PC-3 (cell line): ENCODE measurements at regions of chr14 and their contacts with region 1.

Region 1: GRCh38 chr14:49767562-49768300 is at the start of gene KLHDC2:
- DNase-seq: peak; percentile 94
- ATAC-seq: peak; percentile 74
- H3K4me3 ChIP-seq: peak within 1 kb of the TSS; percentile 94
- H3K27ac ChIP-seq: peak within 1 kb of the TSS; percentile 84
- H3K4me1 ChIP-seq: peaks cover 33% of the 10 kb centered on the region
- H3K27me3 ChIP-seq: no peaks in the 10 kb centered on the region
- CTCF ChIP-seq: peak; percentile 63; the same call in 1 of the 2 replicates
- total RNA-seq, gene KLHDC2: 123 and 126 TPM in 2 replicates

Region 2: GRCh38 chr14:49585803-49586672 is 181.7 kb before region 1 on chr14 and contains the start of gene RPS29:
- CTCF ChIA-PET with region 1: interaction called, 3 read pairs
- POLR2A ChIA-PET with region 1: interaction called, 3 read pairs
- intact Hi-C with region 1: loop called (anchors 1 kb)
- DNase-seq: peak; percentile 100
- ATAC-seq: peak; percentile 89
- H3K4me3 ChIP-seq: peak within 1 kb of the TSS; percentile 93
- H3K27ac ChIP-seq: peak within 1 kb of the TSS; percentile 59
- H3K4me1 ChIP-seq: peaks cover 20% of the 10 kb centered on the region
- H3K27me3 ChIP-seq: no peaks in the 10 kb centered on the region
- CTCF ChIP-seq: no peak
- total RNA-seq, gene RPS29: 1,420 and 1,912 TPM in 2 replicates

Region 3: DNA sequence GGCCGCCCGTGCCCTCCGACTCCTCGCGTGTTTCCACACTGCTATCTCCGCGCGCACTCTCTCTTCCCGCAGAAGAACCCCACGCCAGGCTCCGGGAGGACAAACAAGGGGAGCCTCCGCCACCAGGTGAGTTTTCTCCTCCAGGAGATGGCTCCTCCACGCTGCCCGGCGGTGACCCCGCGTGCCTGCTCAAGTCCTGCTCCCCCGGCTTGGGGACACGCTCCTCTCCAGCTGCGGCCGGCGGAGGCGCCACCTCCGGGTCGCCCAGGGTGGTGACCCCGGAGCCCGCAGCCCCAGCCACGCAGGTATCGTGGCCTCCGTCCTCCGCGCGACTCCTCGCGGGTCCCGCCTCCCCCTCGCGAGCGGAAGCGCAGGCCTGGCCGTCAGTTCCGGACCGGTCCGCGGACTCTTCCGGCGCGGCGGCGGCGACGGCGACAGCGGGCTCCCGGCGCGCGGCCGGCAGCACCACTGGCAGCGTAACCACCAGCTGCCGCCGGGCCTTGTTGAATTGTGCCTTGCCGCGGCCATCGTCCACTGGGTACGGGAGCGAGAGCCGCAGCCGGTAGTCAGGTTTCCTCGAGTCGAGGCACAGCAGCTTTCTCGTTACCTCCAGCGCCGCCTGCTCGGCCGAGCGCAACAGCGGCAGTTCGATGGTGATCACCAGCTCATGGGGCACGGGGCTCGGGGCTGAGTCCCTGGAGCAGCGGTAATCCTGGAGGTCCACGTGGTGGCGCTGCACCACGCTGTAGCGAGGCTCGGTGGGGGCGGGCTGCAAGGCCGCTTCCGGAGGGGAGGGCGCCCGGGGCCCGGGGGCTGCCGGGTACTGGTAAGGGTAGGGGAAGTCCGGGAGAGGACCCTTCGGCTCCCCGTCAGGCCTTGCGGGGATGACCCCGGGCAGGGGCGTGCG is 133.8 kb before region 1 on chr14:
- CTCF ChIA-PET with region 1: interaction called, 21 read pairs
- POLR2A ChIA-PET with region 1: interaction called, 25 read pairs
- intact Hi-C with region 1: loop called (anchors 1 kb)
- DNase-seq: peak; percentile 97
- ATAC-seq: peak; percentile 78
- H3K4me3 ChIP-seq: peak overlapping the region; percentile 71
- H3K27ac ChIP-seq: peak overlapping the region; percentile 88
- H3K4me1 ChIP-seq: peaks cover 28% of the 10 kb centered on the region
- H3K27me3 ChIP-seq: no peaks in the 10 kb centered on the region
- CTCF ChIP-seq: peak; percentile 94

Region 4: GRCh38 chr14:49692811-49693734 is 74.7 kb before region 1 on chr14 and contains the start of gene KLHDC1:
- CTCF ChIA-PET with region 1: interaction called, 9 read pairs
- POLR2A ChIA-PET with region 1: interaction called, 29 read pairs
- intact Hi-C with region 1: loop called (anchors 1 kb)
- DNase-seq: peak; percentile 68
- ATAC-seq: peak; percentile 72
- H3K4me3 ChIP-seq: peak within 1 kb of the TSS; percentile 87
- H3K27ac ChIP-seq: peak within 1 kb of the TSS; percentile 41
- H3K4me1 ChIP-seq: peaks cover 12% of the 10 kb centered on the region; the same call in 1 of the 2 replicates
- H3K27me3 ChIP-seq: no peaks in the 10 kb centered on the region
- CTCF ChIP-seq: no peak
- total RNA-seq, gene KLHDC1: 0.07 and 0.58 TPM in 2 replicates

Region 5: GRCh38 chr14:49732896-49733295 is 34.8 kb before region 1 on chr14:
- CTCF ChIA-PET with region 1: no interaction called
- POLR2A ChIA-PET with region 1: no interaction called
- intact Hi-C with region 1: no loop called
- DNase-seq: no peak
- ATAC-seq: no peak
- H3K4me3 ChIP-seq: no peak overlapping the region
- H3K27ac ChIP-seq: no peak overlapping the region
- H3K4me1 ChIP-seq: no peaks in the 10 kb centered on the region
- H3K27me3 ChIP-seq: no peaks in the 10 kb centered on the region
- CTCF ChIP-seq: no peak

Region 6: GRCh38 chr14:49792618-49793017 is 24.9 kb after region 1 on chr14:
- CTCF ChIA-PET with region 1: no interaction called
- POLR2A ChIA-PET with region 1: no interaction called
- intact Hi-C with region 1: no loop called
- DNase-seq: no peak
- ATAC-seq: no peak
- H3K4me3 ChIP-seq: no peak overlapping the region
- H3K27ac ChIP-seq: no peak overlapping the region
- H3K4me1 ChIP-seq: peaks cover 11% of the 10 kb centered on the region
- H3K27me3 ChIP-seq: no peaks in the 10 kb centered on the region
- CTCF ChIP-seq: no peak

Region 7: GRCh38 chr14:49828640-49829039 is 60.9 kb after region 1 on chr14:
- CTCF ChIA-PET with region 1: no interaction called
- POLR2A ChIA-PET with region 1: no interaction called
- intact Hi-C with region 1: loop called (anchors 5 kb)
- DNase-seq: no peak
- ATAC-seq: no peak
- H3K4me3 ChIP-seq: no peak overlapping the region
- H3K27ac ChIP-seq: no peak overlapping the region
- H3K4me1 ChIP-seq: no peaks in the 10 kb centered on the region
- H3K27me3 ChIP-seq: no peaks in the 10 kb centered on the region
- CTCF ChIP-seq: no peak

Region 8: GRCh38 chr14:50109342-50109741 is 341.6 kb after region 1 on chr14:
- CTCF ChIA-PET with region 1: no interaction called
- POLR2A ChIA-PET with region 1: no interaction called
- intact Hi-C with region 1: loop called (anchors 5 kb)
- DNase-seq: peak; percentile 38
- ATAC-seq: peak; percentile 16; the same call in 1 of the 2 replicates
- H3K4me3 ChIP-seq: no peak overlapping the region
- H3K27ac ChIP-seq: no peak overlapping the region
- H3K4me1 ChIP-seq: peaks cover 10% of the 10 kb centered on the region
- H3K27me3 ChIP-seq: no peaks in the 10 kb centered on the region
- CTCF ChIP-seq: peak; percentile 62